ENCODE measurements at regions of chr1 and their contacts with region 1.

Region 1: DNA sequence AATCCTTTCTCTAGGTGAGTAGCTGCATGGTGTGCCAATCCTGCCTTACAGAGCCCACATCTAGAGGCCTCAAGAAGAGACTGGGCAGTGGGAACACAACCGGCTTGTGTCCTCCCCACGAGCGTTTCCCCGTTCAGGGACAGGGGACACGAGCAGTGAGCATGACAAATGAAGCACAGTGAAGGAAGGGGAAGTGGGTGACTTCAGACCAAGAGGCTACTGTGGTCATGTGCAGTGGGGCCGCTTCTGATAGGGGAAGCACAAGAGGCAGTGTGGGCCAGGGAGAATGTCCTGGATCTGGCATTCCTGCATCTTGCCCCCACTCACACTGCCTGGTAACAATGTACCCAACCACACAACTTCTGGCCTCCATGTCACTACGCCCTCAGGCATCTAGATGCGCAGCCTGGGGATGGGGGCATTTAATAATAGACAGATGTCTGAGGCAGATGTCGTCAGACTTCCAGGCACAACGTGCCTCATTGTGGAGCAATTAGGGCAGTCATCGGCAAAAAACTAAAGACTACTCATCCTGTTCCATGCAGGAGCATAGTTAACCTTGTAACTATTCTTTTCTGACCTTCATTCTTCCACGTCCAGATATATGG is 155.6 kb upstream of the NBPF11 start:
- DNase-seq: no peak
- H3K4me3 ChIP-seq: no peak overlapping the region
- H3K4me3 Mint-ChIP-seq: no peak overlapping the region
- H3K27ac ChIP-seq: no peak overlapping the region
- H3K27ac Mint-ChIP-seq: no peak overlapping the region
- H3K4me1 ChIP-seq: peaks cover 11% of the 10 kb centered on the region
- H3K4me1 Mint-ChIP-seq: peaks cover 11 to 13% (median 12%) of the 10 kb centered on the region in 4 donors
- H3K27me3 ChIP-seq: peaks cover 44% of the 10 kb centered on the region
- H3K27me3 Mint-ChIP-seq: peaks cover 38 to 45% of the 10 kb centered on the region in 2 donors

Region 2: GRCh38 chr1:148263128-148263905 is 44.4 kb before region 1 on chr1:
- CTCF ChIA-PET with region 1: no interaction called
- POLR2A ChIA-PET with region 1: interaction called, 10 read pairs
- intact Hi-C with region 1: no loop called
- DNase-seq: peak; percentile 51 to 66 (median 59)
- H3K4me3 ChIP-seq: peak overlapping the region; percentile 39 to 89
- H3K4me3 Mint-ChIP-seq: peak overlapping the region; percentile 93 to 97 (median 96)
- H3K27ac ChIP-seq: peak overlapping the region; percentile 62
- H3K27ac Mint-ChIP-seq: peak overlapping the region; percentile 81 to 98 (median 97)
- H3K4me1 ChIP-seq: peaks cover 6% of the 10 kb centered on the region
- H3K4me1 Mint-ChIP-seq: peaks cover 3 to 16% (median 4%) of the 10 kb centered on the region in 4 donors
- H3K27me3 ChIP-seq: no peaks in the 10 kb centered on the region
- H3K27me3 Mint-ChIP-seq: no peaks in the 10 kb centered on the region

Measured in CD4-positive, alpha-beta memory T cell (primary cell).